SK-N-SH (cell line): ENCODE measurements at regions of chr12 and their contacts with region 1.

Region 1: DNA sequence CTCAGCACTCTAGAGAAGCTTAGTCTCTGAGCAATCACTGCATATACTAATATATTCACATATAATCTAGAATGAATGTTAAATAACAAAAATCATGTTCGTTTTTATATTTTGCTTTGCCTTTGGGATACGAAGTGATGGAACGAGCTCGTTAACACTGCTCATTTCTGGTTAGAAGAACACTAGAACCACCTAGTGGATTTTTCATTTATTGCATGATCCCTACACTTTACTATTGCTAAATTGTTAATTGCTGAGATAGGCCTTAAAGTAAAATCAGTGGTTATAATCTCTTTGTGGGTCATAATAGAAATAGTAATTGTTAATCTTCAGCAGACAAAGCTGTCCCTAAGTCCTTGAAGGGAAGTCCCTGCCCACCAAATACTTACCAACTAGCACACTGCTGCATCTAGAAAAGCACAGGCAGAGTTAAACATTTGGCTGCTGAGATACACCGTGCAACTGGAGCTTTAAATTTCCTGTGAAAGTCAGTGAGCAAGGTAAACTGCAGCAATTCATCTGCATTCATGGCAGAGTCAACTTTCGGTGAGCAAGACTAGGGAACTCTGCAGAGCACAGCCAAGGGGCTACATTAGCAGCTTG is 353.7 kb downstream of the APAF1 start:
- DNase-seq: peak; percentile 55
- H3K4me3 ChIP-seq: no peak overlapping the region; a peak in 1 of 4 replicates
- H3K27ac ChIP-seq: no peak overlapping the region
- H3K4me1 ChIP-seq: no peaks in the 10 kb centered on the region; a peak in 1 of 4 replicates
- H3K27me3 ChIP-seq: no peaks in the 10 kb centered on the region
- CTCF ChIP-seq: peak; percentile 77
- EP300 ChIP-seq: no peak
- RAD21 ChIP-seq: peak; percentile 91

Region 2: GRCh38 chr12:98698603-98699463 is 300.0 kb before region 1 on chr12:
- CTCF ChIA-PET with region 1: interaction called, 49 read pairs
- POLR2A ChIA-PET with region 1: no interaction called
- DNase-seq: peak; percentile 65
- H3K4me3 ChIP-seq: no peak overlapping the region
- H3K27ac ChIP-seq: no peak overlapping the region
- H3K4me1 ChIP-seq: peaks cover 0 to 3% of the 10 kb centered on the region in 2 experiments; a peak in 2 of 4 replicates
- H3K27me3 ChIP-seq: no peaks in the 10 kb centered on the region
- CTCF ChIP-seq: peak; percentile 74
- EP300 ChIP-seq: no peak
- RAD21 ChIP-seq: peak; percentile 89

Region 3: DNA sequence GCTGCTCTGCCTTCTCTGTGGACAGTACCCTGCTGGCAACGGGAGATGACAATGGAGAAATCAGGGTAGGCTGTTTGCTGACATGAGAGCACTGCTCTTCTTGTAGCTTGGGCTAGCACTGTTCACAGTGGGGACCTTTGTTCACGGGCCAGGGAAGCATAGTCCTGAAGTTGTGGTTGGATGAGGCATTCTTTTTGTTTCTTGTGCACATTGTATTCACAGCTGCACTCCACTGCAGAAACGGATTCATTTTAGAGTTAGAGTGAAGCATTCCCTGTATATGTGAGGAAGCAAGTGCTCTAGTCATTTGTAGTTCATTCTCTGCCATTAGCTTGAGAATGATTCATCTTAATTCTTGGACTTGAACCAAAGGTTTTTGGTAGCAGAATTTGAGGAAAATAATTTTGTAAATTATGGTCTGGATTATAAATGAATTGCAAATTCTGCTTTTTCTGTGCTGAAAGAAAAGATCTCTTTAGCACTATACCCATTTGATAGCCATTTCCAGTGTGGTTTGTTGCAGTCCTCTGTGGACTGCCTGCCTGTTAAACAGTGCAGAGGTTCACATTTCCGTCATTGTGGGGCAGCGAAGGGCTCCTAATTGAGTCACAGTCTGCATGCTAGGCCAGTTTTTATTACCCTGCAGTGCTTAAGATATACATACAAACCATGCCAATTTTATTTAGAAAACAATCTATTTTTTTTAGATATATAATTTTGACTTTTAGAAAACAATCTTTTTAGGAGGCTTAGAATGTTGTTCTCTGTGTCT is 273.1 kb before region 1 on chr12:
- CTCF ChIA-PET with region 1: interaction called, 15 read pairs
- POLR2A ChIA-PET with region 1: no interaction called
- DNase-seq: peak; percentile 46
- H3K4me3 ChIP-seq: no peak overlapping the region; a peak in 1 of 4 replicates
- H3K27ac ChIP-seq: peak overlapping the region in 1 of 2 experiments; percentile 44; a peak in 2 of 4 replicates
- H3K4me1 ChIP-seq: peaks cover 0 to 17% of the 10 kb centered on the region in 2 experiments; a peak in 2 of 4 replicates
- H3K27me3 ChIP-seq: no peaks in the 10 kb centered on the region
- CTCF ChIP-seq: peak; percentile 60
- EP300 ChIP-seq: no peak
- RAD21 ChIP-seq: peak; percentile 70

Region 4: DNA sequence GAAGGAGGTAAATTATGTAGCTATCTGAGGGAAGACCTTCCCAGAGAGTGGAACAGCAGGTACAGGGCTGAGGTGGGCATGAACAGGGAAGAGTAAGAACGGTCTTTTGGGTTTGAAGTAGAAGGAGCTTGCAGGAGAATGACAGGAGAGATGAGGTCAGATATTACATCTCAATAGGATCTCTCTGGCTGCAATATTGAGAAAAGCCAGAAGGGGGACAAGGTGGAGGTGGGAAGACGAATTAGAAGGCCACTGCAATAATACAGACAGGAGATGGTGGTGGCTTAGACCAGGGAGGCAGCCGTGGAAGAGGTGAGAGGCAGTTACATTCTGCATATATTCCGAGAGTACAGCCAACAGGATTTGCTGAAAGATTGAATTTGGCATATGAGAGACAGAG is 43.5 kb before region 1 on chr12:
- CTCF ChIA-PET with region 1: interaction called, 18 read pairs
- POLR2A ChIA-PET with region 1: no interaction called
- DNase-seq: peak; percentile 18
- H3K4me3 ChIP-seq: no peak overlapping the region
- H3K27ac ChIP-seq: no peak overlapping the region
- H3K4me1 ChIP-seq: no peaks in the 10 kb centered on the region
- H3K27me3 ChIP-seq: no peaks in the 10 kb centered on the region
- CTCF ChIP-seq: peak; percentile 47
- EP300 ChIP-seq: no peak
- RAD21 ChIP-seq: 0 out of 2 replicates have a peak, but pooled peaks have one; percentile 20

Region 5: DNA sequence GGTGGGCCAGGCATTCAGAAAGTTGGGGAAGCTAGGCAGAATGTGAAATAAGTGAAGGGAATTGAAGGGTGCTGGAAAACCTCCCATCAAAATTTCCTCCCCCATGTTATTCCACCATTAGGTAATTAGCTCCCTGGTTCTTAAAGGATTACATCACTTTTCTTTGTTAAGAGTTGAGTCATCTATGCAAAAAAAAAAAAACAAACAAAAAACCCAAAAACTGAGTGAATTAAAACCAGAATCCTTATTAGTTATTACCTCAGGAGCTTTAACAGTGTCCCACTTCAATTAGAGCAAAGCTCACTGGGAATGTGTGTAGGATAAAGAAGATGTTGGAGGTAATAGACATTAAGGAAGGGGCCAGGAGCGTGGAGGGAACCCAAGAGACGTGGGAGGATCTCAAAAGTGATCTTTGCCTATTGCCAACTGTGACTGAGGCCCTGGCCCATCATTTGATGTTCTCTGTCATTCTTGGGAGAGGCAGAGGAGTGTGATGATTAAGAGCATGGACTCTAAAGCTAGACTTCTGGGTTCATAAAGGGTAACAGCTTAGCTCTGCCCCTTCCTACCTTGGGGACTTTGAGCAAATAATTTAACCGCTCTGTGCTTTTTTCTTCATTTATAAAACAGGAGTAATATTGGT is 11.0 kb after region 1 on chr12:
- CTCF ChIA-PET with region 1: interaction called, 54 read pairs
- POLR2A ChIA-PET with region 1: no interaction called
- DNase-seq: no peak
- H3K4me3 ChIP-seq: no peak overlapping the region
- H3K27ac ChIP-seq: no peak overlapping the region
- H3K4me1 ChIP-seq: no peaks in the 10 kb centered on the region
- H3K27me3 ChIP-seq: no peaks in the 10 kb centered on the region
- CTCF ChIP-seq: no peak
- EP300 ChIP-seq: no peak
- RAD21 ChIP-seq: no peak

Region 6: GRCh38 chr12:99068993-99069747 is 70.4 kb after region 1 on chr12:
- CTCF ChIA-PET with region 1: no interaction called
- POLR2A ChIA-PET with region 1: no interaction called
- DNase-seq: no peak
- H3K4me3 ChIP-seq: no peak overlapping the region
- H3K27ac ChIP-seq: no peak overlapping the region
- H3K4me1 ChIP-seq: no peaks in the 10 kb centered on the region
- H3K27me3 ChIP-seq: no peaks in the 10 kb centered on the region
- CTCF ChIP-seq: no peak
- EP300 ChIP-seq: no peak
- RAD21 ChIP-seq: no peak

Region 7: GRCh38 chr12:99413751-99414150 is 415.0 kb after region 1 on chr12:
- CTCF ChIA-PET with region 1: no interaction called
- POLR2A ChIA-PET with region 1: no interaction called
- DNase-seq: no peak
- H3K4me3 ChIP-seq: no peak overlapping the region
- H3K27ac ChIP-seq: no peak overlapping the region
- H3K4me1 ChIP-seq: no peaks in the 10 kb centered on the region
- H3K27me3 ChIP-seq: no peaks in the 10 kb centered on the region
- CTCF ChIP-seq: no peak
- EP300 ChIP-seq: no peak
- RAD21 ChIP-seq: no peak